OCI-LY7 (cell line): ENCODE measurements at regions of chr5 and their contacts with region 1.

Region 1: DNA sequence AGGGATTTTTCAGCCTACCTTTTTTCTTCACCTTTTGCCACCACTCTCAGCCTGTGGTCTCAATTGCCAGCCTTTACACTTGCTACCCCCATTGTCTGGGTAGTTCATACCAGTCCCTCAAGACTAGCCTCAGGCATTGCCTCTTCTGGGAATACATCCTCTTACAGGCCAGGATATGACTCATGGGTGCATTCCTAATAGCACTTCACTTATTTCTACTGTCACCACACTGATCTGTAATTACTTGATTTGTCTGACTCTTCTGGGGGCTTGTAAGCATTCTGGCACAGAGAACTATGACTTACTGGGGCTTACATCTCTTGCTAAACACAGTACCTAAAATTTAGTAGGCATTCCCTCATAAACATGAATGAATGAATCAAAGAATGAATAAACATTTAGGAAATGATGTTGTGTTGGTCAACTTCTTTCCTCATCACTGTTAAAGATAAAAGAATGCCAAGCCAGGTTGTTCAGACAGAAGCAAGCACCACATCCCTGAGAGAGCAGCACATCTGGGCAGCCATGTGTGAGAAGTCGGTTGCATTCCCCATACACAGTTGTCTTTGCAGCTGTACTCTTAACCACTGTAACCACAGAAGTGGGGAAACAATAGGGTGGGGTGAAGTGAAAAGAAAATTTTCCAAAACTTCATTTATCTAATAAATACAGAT is 27.6 kb downstream of the IL7R start:
- DNase-seq: peak; percentile 98
- H3K4me3 ChIP-seq: peak overlapping the region; percentile 19
- H3K27ac ChIP-seq: peak overlapping the region; percentile 100
- H3K4me1 ChIP-seq: peaks cover 95% of the 10 kb centered on the region
- CTCF ChIP-seq: no peak

Region 2: GRCh38 chr5:35852084-35852734 is 32.0 kb before region 1 on chr5:
- CTCF ChIA-PET with region 1: interaction called, 3 read pairs
- POLR2A ChIA-PET with region 1: interaction called, 52 read pairs
- intact Hi-C with region 1: no loop called
- DNase-seq: peak; percentile 49
- H3K4me3 ChIP-seq: peak overlapping the region; percentile 4
- H3K27ac ChIP-seq: peak overlapping the region; percentile 3
- H3K4me1 ChIP-seq: peaks cover 57% of the 10 kb centered on the region
- CTCF ChIP-seq: 0 out of 2 replicates have a peak, but pooled peaks have one; percentile 12

Region 3: GRCh38 chr5:35902046-35902676 is 17.9 kb after region 1 on chr5:
- CTCF ChIA-PET with region 1: interaction called, 4 read pairs
- POLR2A ChIA-PET with region 1: interaction called, 104 read pairs
- intact Hi-C with region 1: loop called (anchors 1 kb)
- DNase-seq: no peak
- H3K4me3 ChIP-seq: no peak overlapping the region
- H3K27ac ChIP-seq: peak overlapping the region; percentile 54
- H3K4me1 ChIP-seq: peaks cover 87% of the 10 kb centered on the region
- CTCF ChIP-seq: no peak

Region 4: GRCh38 chr5:35963381-35963843 is 79.2 kb after region 1 on chr5:
- CTCF ChIA-PET with region 1: no interaction called
- POLR2A ChIA-PET with region 1: no interaction called
- intact Hi-C with region 1: no loop called
- DNase-seq: peak; percentile 11
- H3K4me3 ChIP-seq: no peak overlapping the region
- H3K27ac ChIP-seq: no peak overlapping the region
- H3K4me1 ChIP-seq: no peaks in the 10 kb centered on the region
- CTCF ChIP-seq: peak; percentile 81